ENCODE measurements at regions of chr4 and their contacts with region 1.

Region 1: DNA sequence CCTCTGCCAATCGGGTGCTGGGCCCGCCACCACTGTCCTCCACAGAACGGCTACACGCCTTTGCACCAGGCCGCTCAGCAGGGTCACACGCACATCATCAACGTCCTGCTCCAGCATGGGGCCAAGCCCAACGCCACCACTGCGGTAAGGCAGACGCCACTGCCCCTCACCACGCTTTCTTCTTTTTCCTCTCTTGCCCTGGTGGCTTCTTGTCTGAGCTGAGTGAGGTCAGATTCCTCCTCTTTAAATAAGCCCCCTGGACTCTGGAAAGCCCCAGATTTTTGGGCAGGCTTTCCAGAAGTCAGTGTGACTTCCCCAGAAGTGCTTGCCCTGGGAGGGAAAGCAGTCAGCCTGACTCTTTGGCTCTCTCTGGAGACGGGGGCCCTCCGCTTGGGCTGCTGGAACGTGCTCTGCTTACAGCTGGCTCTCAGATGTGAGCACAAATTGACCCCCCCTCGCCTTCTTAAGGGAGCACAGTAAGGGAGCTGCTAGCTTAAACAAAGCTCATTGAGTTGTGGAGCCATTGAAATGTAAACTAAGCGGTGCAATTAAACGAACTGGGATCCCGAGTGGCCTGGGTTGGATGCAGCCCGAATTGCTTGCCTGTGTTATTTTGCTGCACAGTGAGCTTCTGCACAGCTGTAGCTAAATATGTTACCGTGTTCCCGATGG is 243.1 kb downstream of the ANK2 start:
- DNase-seq: no peak
- H3K4me3 Mint-ChIP-seq: no peak overlapping the region
- H3K27ac Mint-ChIP-seq: no peak overlapping the region
- H3K4me1 Mint-ChIP-seq: no peaks in the 10 kb centered on the region
- H3K27me3 Mint-ChIP-seq: no peaks in the 10 kb centered on the region
- CTCF ChIP-seq: no peak

Region 2: DNA sequence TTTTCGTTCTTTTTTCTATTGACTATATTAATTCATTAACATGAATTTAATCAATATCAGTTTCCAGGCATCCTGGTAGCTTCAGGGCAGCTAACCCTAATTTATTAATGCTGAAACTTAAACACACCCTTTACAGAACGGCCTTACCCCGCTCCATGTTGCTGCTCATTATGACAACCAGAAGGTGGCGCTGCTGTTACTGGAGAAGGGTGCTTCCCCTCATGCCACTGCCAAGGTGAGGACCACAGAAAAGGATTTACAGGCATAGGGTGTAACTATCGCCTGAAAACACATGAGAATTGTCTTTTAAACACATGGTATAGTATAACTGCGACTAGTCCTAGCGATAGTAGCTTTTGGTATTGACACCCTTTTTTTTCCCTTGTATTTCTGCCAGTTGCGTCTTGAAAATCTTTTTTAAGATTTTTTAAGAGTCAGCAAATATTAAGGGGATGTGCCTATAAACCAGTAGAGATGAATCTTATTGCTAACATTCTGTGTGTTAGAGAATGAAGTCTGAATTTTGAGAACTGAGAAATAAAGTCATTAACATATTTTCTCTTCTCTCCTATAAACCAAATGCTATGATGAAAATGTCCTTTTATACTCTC is 14.1 kb before region 1 on chr4:
- CTCF ChIA-PET with region 1: interaction called, 10 read pairs
- POLR2A ChIA-PET with region 1: no interaction called
- intact Hi-C with region 1: no loop called
- DNase-seq: peak; percentile 90
- H3K4me3 Mint-ChIP-seq: no peak overlapping the region
- H3K27ac Mint-ChIP-seq: no peak overlapping the region
- H3K4me1 Mint-ChIP-seq: no peaks in the 10 kb centered on the region
- H3K27me3 Mint-ChIP-seq: no peaks in the 10 kb centered on the region
- CTCF ChIP-seq: peak; percentile 80

Region 3: DNA sequence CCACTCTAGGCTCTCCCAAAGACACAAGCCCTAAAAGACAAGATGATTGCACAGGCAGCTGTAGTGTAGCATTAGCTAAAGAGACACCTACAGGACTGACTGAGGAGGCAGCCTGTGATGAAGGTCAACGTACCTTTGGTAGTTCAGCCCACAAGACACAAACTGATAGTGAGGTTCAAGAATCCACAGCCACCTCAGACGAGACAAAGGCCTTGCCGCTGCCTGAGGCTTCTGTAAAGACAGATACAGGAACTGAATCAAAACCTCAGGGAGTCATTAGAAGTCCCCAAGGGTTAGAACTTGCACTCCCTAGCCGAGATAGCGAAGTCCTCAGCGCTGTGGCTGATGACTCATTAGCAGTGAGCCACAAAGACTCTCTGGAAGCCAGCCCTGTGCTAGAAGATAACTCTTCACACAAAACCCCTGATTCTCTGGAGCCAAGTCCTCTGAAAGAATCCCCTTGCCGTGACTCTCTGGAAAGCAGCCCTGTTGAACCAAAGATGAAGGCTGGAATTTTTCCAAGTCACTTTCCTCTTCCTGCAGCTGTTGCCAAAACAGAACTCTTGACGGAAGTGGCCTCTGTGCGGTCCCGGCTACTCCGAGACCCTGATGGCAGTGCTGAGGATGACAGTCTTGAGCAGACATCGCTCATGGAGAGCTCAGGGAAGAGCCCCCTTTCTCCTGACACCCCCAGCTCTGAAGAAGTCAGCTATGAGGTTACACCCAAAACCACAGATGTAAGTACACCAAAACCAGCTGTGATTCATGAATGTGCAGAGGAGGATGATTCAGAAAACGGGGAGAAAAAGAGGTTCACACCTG is 63.3 kb after region 1 on chr4:
- CTCF ChIA-PET with region 1: interaction called, 3 read pairs
- POLR2A ChIA-PET with region 1: no interaction called
- intact Hi-C with region 1: loop called (anchors 10 kb)
- DNase-seq: peak; percentile 87
- H3K4me3 Mint-ChIP-seq: peak overlapping the region; percentile 59
- H3K27ac Mint-ChIP-seq: peak overlapping the region; percentile 5
- H3K4me1 Mint-ChIP-seq: peaks cover 28% of the 10 kb centered on the region
- H3K27me3 Mint-ChIP-seq: no peaks in the 10 kb centered on the region
- CTCF ChIP-seq: no peak

Region 4: GRCh38 chr4:113952452-113953029 is 660.0 kb after region 1 on chr4:
- CTCF ChIA-PET with region 1: no interaction called
- POLR2A ChIA-PET with region 1: no interaction called
- intact Hi-C with region 1: loop called (anchors 10 kb)
- DNase-seq: peak; percentile 64
- H3K4me3 Mint-ChIP-seq: no peak overlapping the region
- H3K27ac Mint-ChIP-seq: no peak overlapping the region
- H3K4me1 Mint-ChIP-seq: peaks cover 37% of the 10 kb centered on the region
- H3K27me3 Mint-ChIP-seq: no peaks in the 10 kb centered on the region
- CTCF ChIP-seq: peak; percentile 73

Measured in MCF 10A (cell line).